Brain microvascular endothelial cell (primary cell): ENCODE measurements at regions of chr22 and their contacts with region 1.

Region 1: GRCh38 chr22:40636380-40637182 is at the start of gene MRTFA:
- DNase-seq: peak; percentile 100
- H3K4me3 ChIP-seq: peak within 1 kb of the TSS; percentile 77
- H3K27ac ChIP-seq: peak within 1 kb of the TSS; percentile 67
- H3K27me3 ChIP-seq: no peaks in the 10 kb centered on the region
- CTCF ChIP-seq: no peak

Region 2: DNA sequence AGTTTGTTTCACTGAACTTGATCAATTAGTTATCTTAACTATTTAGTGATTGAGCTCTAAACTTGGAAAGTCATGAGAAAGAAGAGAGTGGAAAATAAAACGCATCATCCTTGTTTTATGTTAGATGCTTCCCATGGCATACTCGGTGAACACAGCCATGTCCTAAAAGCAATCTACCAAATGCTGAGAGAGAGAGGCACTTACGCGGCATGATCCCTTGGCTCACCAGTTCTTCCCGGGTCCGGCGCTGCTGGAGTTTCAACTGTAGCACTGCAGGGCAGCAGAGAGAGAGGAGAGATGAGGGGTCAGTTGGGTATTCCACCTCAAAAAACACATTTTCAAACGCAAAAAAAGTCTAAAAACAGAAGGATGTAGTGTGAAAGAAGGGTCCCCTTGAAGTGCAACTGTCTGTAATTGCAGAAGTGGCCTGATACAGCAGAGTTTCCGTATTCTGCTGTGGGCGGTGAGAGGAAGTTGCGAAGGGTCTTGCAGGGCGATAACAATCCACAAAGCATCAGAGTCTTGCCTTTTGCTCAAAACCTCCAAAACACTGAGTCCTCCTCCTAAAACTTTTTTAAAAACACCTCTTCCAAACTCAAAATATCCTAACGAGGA is 173.5 kb before region 1 on chr22:
- in situ Hi-C with region 1: no loop called
- DNase-seq: no peak
- H3K4me3 ChIP-seq: no peak overlapping the region
- H3K27ac ChIP-seq: no peak overlapping the region
- H3K27me3 ChIP-seq: no peaks in the 10 kb centered on the region
- CTCF ChIP-seq: no peak

Region 3: GRCh38 chr22:40533712-40534378 is 102.7 kb before region 1 on chr22:
- in situ Hi-C with region 1: loop called (anchors 25 kb)
- DNase-seq: peak; percentile 69
- H3K4me3 ChIP-seq: peak overlapping the region; percentile 58
- H3K27ac ChIP-seq: peak overlapping the region; percentile 70
- H3K27me3 ChIP-seq: no peaks in the 10 kb centered on the region
- CTCF ChIP-seq: no peak

Region 4: GRCh38 chr22:40818747-40819598 is 182.4 kb after region 1 on chr22 and contains the start of gene SLC25A17:
- in situ Hi-C with region 1: no loop called
- DNase-seq: peak; percentile 63
- H3K4me3 ChIP-seq: peak within 1 kb of the TSS; percentile 99
- H3K27ac ChIP-seq: peak within 1 kb of the TSS; percentile 60
- H3K27me3 ChIP-seq: no peaks in the 10 kb centered on the region
- CTCF ChIP-seq: peak; percentile 69